GM12878 (cell line): ENCODE measurements at regions of chr9 and their contacts with region 1.

Region 1: GRCh38 chr9:20941174-20941690 is 90.2 kb downstream of the HACD4 start:
- DNase-seq: peak; percentile 54
- ATAC-seq: peak; percentile 100
- H3K4me3 ChIP-seq: no peak overlapping the region
- H3K27ac ChIP-seq: no peak overlapping the region
- H3K4me1 ChIP-seq: no peaks in the 10 kb centered on the region
- H3K27me3 ChIP-seq: no peaks in the 10 kb centered on the region
- CTCF ChIP-seq: peak; percentile 77 to 84 (median 84)
- EP300 ChIP-seq: no peak
- POLR2A ChIP-seq: no peak
- RAD21 ChIP-seq: peak; percentile 93

Region 2: DNA sequence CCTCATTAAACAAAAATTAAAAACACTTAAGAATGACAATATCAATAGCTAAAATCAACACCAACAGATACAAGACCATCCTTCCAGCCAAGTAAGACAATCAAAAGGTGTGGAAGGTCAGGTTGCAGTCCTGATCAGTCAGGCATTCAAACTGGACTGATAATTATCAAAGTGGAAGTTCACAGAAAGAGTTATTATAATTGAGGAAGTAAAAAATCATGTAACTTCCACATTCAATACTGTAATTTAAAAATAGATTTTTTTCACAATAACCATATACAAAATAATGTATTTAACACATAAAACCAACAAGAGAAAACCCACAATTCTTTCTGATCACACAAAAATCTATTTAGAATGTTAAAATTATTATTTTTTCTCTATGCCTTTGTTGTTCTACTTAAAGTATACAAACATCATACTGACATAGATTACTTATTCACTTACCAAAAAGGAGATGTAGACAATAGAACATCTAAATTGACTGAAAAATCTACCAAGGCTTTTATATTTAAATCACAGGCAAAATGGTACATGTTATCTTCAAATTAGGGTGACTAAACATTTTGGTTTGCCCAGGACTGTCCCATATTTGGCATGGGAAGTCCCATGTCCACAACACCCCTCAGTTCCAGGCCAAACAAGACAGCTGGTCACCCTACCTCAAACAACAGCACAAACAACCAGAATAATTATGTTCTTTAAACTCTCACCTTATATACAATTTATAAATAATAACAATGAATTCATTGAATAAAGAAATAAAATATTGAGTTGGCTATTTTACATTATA is 1009.9 kb before region 1 on chr9:
- CTCF ChIA-PET with region 1: interaction called, 12 read pairs
- POLR2A ChIA-PET with region 1: no interaction called
- RAD21 ChIA-PET with region 1: interaction called, 11 read pairs
- SMC1A ChIA-PET with region 1: interaction called, 6 read pairs
- in situ Hi-C with region 1: loop called (anchors 5 kb)
- intact Hi-C with region 1: loop called (anchors 1 kb)
- DNase-seq: no peak
- ATAC-seq: no peak
- H3K4me3 ChIP-seq: no peak overlapping the region
- H3K27ac ChIP-seq: no peak overlapping the region
- H3K4me1 ChIP-seq: no peaks in the 10 kb centered on the region; the same call in 1 of the 2 replicates
- H3K27me3 ChIP-seq: no peaks in the 10 kb centered on the region; a peak in 1 of 4 replicates
- CTCF ChIP-seq: no peak
- EP300 ChIP-seq: no peak
- POLR2A ChIP-seq: no peak
- RAD21 ChIP-seq: no peak

Region 3: DNA sequence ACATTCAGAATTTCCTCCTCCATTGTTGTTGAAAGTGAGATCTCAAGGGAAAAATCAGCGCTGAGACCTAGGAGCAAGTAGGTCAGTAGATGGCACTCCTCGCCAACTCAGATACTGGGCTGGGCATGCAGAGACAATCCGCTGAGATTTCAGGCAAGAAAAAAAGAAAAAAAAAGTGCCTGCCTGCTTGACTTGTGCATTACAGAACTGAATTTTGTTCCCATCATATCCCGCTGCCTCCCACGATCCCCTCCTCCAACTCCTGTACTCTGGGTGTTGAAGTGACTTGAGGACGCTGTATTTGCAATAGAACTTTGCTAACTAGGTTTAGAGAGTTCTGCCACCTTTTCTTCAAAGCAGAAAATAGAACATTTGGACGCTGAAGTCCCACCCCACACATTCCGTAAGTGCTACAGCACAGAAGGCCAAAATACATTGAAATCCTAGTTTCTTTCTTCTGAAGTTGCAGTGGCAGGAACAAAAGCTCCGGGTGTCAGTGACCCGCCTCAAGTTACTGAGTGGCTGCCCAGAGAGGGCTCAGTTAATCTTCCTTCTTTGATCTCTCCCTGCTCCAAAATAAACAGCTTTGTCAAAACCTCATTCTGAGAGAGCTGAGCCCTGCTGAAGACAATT is 584.7 kb before region 1 on chr9:
- CTCF ChIA-PET with region 1: interaction called, 14 read pairs
- POLR2A ChIA-PET with region 1: no interaction called
- RAD21 ChIA-PET with region 1: interaction called, 19 read pairs
- SMC1A ChIA-PET with region 1: interaction called, 21 read pairs
- in situ Hi-C with region 1: loop called (anchors 5 kb)
- intact Hi-C with region 1: loop called (anchors 1 kb)
- DNase-seq: peak; percentile 36
- ATAC-seq: peak; percentile 39
- H3K4me3 ChIP-seq: no peak overlapping the region
- H3K27ac ChIP-seq: no peak overlapping the region
- H3K4me1 ChIP-seq: peaks cover 29% of the 10 kb centered on the region
- H3K27me3 ChIP-seq: no peaks in the 10 kb centered on the region
- CTCF ChIP-seq: peak; percentile 62 to 80 (median 68)
- EP300 ChIP-seq: no peak
- POLR2A ChIP-seq: no peak
- RAD21 ChIP-seq: peak; percentile 97

Region 4: GRCh38 chr9:20640331-20641187 is 300.7 kb before region 1 on chr9:
- CTCF ChIA-PET with region 1: interaction called, 3 read pairs
- POLR2A ChIA-PET with region 1: no interaction called
- RAD21 ChIA-PET with region 1: interaction called, 11 read pairs
- SMC1A ChIA-PET with region 1: interaction called, 3 read pairs
- in situ Hi-C with region 1: no loop called
- intact Hi-C with region 1: no loop called
- DNase-seq: peak; percentile 99
- ATAC-seq: peak; percentile 96
- H3K4me3 ChIP-seq: no peak overlapping the region
- H3K27ac ChIP-seq: peak overlapping the region; percentile 73
- H3K4me1 ChIP-seq: peaks cover 13% of the 10 kb centered on the region
- H3K27me3 ChIP-seq: no peaks in the 10 kb centered on the region
- CTCF ChIP-seq: no peak
- EP300 ChIP-seq: peak; percentile 67 to 90; a peak in 3 of 4 replicates
- POLR2A ChIP-seq: peak; percentile 46; the same call in 1 of the 2 replicates
- RAD21 ChIP-seq: peak; percentile 11; the same call in 1 of the 2 replicates

Region 5: DNA sequence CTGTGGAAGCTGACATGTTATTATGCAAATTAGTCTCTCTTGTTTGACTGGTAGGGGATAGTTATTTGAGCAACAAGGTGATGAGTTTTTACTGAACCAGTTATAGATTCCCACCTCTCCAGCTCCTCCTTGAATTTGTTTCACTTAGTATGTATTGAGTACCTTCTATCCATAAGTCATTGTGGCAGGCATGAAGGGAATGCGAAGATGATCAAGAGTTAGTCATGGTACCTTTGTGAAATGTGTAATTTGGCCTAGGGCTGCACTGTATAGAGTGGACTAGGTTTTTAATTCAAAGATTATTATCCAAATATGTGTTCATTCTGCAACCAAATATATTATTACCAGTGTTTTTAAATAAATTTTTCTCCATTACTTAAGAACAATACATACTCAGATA is 19.9 kb before region 1 on chr9:
- CTCF ChIA-PET with region 1: interaction called, 10 read pairs
- POLR2A ChIA-PET with region 1: no interaction called
- RAD21 ChIA-PET with region 1: no interaction called
- SMC1A ChIA-PET with region 1: no interaction called
- in situ Hi-C with region 1: no loop called
- intact Hi-C with region 1: no loop called
- DNase-seq: no peak
- ATAC-seq: no peak
- H3K4me3 ChIP-seq: no peak overlapping the region
- H3K27ac ChIP-seq: no peak overlapping the region
- H3K4me1 ChIP-seq: no peaks in the 10 kb centered on the region
- H3K27me3 ChIP-seq: no peaks in the 10 kb centered on the region
- CTCF ChIP-seq: no peak
- EP300 ChIP-seq: no peak
- POLR2A ChIP-seq: no peak
- RAD21 ChIP-seq: no peak

Region 6: DNA sequence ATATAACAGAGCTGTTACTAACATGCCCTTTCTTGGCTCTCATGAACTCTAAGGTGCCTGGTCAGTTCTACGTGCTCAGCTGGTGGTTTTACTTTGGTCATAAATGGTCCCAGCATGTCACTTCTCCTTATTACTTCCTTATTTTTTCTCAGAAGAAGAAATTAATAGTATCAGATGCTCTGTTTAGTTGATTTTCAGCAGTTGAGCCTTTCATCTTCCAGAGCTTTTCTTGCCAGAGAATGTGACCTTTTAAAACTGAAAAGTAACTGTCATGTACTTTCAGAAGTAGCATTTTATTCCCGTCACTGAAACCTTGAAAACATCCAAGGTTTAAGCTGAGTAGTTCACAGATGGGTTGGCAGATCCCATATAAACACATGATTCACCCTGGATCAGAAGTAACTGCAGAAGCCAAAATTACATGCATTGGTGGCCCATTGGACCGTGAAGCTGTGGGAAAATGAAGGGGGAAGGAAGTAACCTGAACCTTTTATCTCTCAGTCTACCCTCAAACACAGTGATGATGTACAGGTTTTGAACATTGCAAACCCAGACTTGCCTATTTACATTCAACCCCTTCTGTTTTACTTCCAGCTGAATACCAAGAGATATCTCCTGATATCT is 39.7 kb after region 1 on chr9:
- CTCF ChIA-PET with region 1: interaction called, 11 read pairs
- POLR2A ChIA-PET with region 1: no interaction called
- RAD21 ChIA-PET with region 1: no interaction called
- SMC1A ChIA-PET with region 1: interaction called, 3 read pairs
- in situ Hi-C with region 1: no loop called
- intact Hi-C with region 1: no loop called
- DNase-seq: peak; percentile 33
- ATAC-seq: peak; percentile 93
- H3K4me3 ChIP-seq: no peak overlapping the region
- H3K27ac ChIP-seq: peak overlapping the region; percentile 83
- H3K4me1 ChIP-seq: peaks cover 10% of the 10 kb centered on the region
- H3K27me3 ChIP-seq: no peaks in the 10 kb centered on the region
- CTCF ChIP-seq: no peak
- EP300 ChIP-seq: 0 out of 4 replicates have a peak, but pooled peaks of 1 of the 2 experiments have one; percentile 39
- POLR2A ChIP-seq: no peak
- RAD21 ChIP-seq: no peak